Dorsolateral prefrontal cortex (tissue), 120 donors: ENCODE measurements at regions of chr2 and their contacts with region 1.

Region 1: GRCh38 chr2:177618255-177619253 is 226.0 kb downstream of the AGPS start:
- DNase-seq: peak; percentile 89 to 96 (median 94)
- H3K4me3 ChIP-seq: peak overlapping the region; percentile 65 to 95 (median 80)
- H3K27ac ChIP-seq: peak overlapping the region; percentile 94 to 100 (median 99)
- H3K27me3 ChIP-seq: no peaks in the 10 kb centered on the region
- CTCF ChIP-seq: peak in 33 of 56 donors; percentile 1 to 61 (median 31)

Region 2: GRCh38 chr2:177445200-177445599 is 173.4 kb before region 1 on chr2:
- intact Hi-C with region 1: no loop called
- DNase-seq: no peak
- H3K4me3 ChIP-seq: no peak overlapping the region
- H3K27ac ChIP-seq: no peak overlapping the region
- H3K27me3 ChIP-seq: no peaks in the 10 kb centered on the region
- CTCF ChIP-seq: no peak

Region 3: GRCh38 chr2:177552422-177553175 is 66.0 kb before region 1 on chr2:
- intact Hi-C with region 1: loop called (anchors 2 to 5 kb)
- DNase-seq: peak; percentile 84 to 91 (median 86)
- H3K4me3 ChIP-seq: peak overlapping the region; percentile 51 to 99 (median 86)
- H3K27ac ChIP-seq: peak overlapping the region; percentile 87 to 100 (median 98)
- H3K27me3 ChIP-seq: no peaks in the 10 kb centered on the region
- CTCF ChIP-seq: peak in 19 of 56 donors; percentile 11 to 59 (median 22)

Region 4: DNA sequence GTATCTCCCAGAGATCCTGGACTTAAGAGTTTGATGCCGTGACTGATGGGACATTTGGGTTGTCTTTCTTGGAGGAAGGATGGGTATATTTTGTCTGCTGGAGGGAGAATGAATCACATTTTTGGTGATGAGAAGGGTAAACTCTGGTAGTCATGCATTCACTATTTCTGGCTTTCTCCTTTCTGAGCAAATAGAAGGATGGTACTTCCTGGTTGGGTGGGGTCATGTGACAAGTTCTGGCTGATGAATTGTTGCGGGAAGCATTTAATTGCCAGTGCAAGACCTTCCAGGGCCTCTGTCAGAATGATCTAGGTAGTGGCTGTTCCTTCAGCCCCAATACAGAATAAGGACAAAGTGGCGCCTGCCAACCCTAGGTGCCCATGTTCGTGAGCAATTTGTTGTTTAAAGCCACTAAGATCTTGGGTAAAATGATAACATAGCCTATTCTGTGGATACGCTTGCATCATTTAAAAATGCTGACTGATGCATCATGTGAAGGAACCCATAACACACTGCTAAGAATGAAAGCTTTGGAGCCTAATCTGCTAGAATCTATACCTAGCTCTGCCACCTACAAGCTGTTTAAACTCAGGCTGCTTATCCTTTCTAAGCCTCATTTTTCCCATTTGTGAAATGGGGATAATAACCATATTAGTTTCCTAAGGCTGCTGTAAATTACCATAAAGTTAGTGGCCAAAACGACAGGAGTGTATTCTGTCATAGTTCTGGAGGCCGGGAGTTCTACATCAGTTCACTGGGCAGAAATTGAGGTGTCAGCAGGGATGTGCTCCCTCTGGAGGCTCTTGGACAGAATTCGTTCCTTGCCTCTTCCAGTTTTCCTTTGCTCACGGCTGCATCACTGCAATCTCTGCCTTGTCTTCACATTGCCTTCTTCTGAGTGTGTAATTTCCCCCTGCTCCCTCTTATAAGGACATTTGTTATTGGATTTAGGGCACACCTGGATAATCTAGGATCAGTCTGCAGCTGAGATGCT is 55.3 kb after region 1 on chr2:
- intact Hi-C with region 1: loop called in 1 of 2 experiments (anchors 2 kb)
- DNase-seq: no peak
- H3K4me3 ChIP-seq: no peak overlapping the region
- H3K27ac ChIP-seq: peak overlapping the region in 1 of 59 donors; percentile 6
- H3K27me3 ChIP-seq: peaks cover 0 to 4% (median 0%) of the 10 kb centered on the region in 45 donors
- CTCF ChIP-seq: no peak

Region 5: GRCh38 chr2:177724398-177725287 is 106.1 kb after region 1 on chr2:
- intact Hi-C with region 1: loop called (anchors 5 to 10 kb)
- DNase-seq: peak in 9 of 10 donors; percentile 45 to 71 (median 55)
- H3K4me3 ChIP-seq: peak overlapping the region in 11 of 59 donors; percentile 4 to 35 (median 13)
- H3K27ac ChIP-seq: peak overlapping the region in 1 of 59 donors; percentile 25
- H3K27me3 ChIP-seq: no peaks in the 10 kb centered on the region
- CTCF ChIP-seq: peak; percentile 53 to 96 (median 88)